Endothelial cell of umbilical vein (primary cell): ENCODE measurements at regions of chr10 and their contacts with region 1.

Region 1: DNA sequence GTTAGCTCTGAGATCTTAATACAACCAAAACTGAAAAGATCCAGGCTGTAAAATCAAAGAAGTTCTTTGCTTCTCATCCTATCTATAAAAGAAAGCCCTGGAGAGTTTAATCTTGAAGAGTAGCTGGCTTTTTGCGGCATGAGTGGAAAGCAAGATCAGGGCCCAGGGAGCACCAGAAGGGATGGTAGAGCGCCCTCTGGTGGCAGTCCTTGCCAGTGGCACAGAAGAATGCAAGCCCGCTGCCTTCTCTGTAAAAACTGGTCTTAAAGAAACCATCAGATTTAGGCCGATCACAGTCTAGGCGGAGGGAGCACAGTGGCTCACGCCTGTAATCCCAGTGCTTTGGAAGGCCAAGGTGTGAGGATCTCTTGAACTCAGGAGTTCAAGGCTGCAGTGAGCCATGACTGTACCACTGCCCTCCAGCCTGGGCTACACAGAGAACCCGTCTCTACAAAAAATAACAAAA is 35.6 kb downstream of the CPN1 start:
- DNase-seq: peak; percentile 85
- H3K4me3 ChIP-seq: no peak overlapping the region
- H3K27ac ChIP-seq: no peak overlapping the region
- H3K4me1 ChIP-seq: peaks cover 19% of the 10 kb centered on the region
- H3K27me3 ChIP-seq: no peaks in the 10 kb centered on the region
- CTCF ChIP-seq: peak; percentile 88 to 94
- POLR2A ChIP-seq: no peak

Region 2: DNA sequence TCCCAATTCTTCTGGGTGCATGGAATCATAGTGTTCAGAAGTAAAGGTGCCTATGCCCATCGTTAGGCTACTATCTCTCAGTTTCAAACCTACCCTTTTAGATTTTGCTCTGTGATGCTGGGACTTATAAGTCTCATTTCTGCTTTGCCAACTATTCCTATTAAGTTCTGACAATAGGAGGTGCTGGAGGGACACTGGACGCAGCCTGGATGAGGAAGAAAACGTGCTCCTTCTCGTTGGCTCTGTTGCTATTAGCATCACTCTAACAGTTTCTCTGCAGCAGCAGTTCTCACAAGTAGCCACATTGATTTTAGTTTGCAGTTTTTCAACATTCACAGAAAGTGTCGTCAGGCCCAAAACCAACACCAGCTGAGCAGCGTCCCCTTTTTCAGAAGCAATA is 191.2 kb before region 1 on chr10:
- CTCF ChIA-PET with region 1: interaction called, 75 read pairs
- POLR2A ChIA-PET with region 1: no interaction called
- dilution Hi-C with region 1: no loop called
- intact Hi-C with region 1: loop called (anchors 1 kb)
- DNase-seq: peak; percentile 91
- H3K4me3 ChIP-seq: no peak overlapping the region
- H3K27ac ChIP-seq: no peak overlapping the region
- H3K4me1 ChIP-seq: no peaks in the 10 kb centered on the region
- H3K27me3 ChIP-seq: no peaks in the 10 kb centered on the region
- CTCF ChIP-seq: peak; percentile 53 to 66
- POLR2A ChIP-seq: no peak

Region 3: DNA sequence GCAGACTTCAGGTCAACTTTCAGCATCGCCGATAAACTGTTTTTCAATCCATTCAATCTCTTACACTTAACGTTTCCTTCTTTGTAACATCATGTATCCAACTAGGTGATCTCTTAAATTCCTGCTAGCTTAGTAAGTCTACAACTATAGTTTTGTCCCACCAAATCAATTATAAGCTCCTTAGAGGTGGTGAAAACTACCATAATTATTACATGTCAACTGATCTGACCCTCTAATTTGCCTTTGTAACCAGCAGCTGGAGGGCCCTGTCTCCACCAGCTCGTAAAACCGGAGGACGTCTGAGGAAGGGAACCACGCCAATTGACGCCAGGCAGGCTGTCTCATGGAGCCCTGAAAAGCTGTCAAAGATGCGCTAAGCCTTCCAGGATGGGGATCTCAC is 150.2 kb before region 1 on chr10:
- CTCF ChIA-PET with region 1: interaction called, 18 read pairs
- POLR2A ChIA-PET with region 1: no interaction called
- dilution Hi-C with region 1: no loop called
- intact Hi-C with region 1: no loop called
- DNase-seq: no peak
- H3K4me3 ChIP-seq: no peak overlapping the region
- H3K27ac ChIP-seq: no peak overlapping the region
- H3K4me1 ChIP-seq: no peaks in the 10 kb centered on the region
- H3K27me3 ChIP-seq: no peaks in the 10 kb centered on the region
- CTCF ChIP-seq: no peak
- POLR2A ChIP-seq: no peak

Region 4: GRCh38 chr10:99966306-99966705 is 79.7 kb before region 1 on chr10:
- CTCF ChIA-PET with region 1: interaction called, 40 read pairs
- POLR2A ChIA-PET with region 1: interaction called, 3 read pairs
- dilution Hi-C with region 1: no loop called
- intact Hi-C with region 1: loop called (anchors 2 kb)
- DNase-seq: peak; percentile 93
- H3K4me3 ChIP-seq: peak overlapping the region in 1 of 3 experiments; percentile 6
- H3K27ac ChIP-seq: peak overlapping the region; percentile 96
- H3K4me1 ChIP-seq: peaks cover 69% of the 10 kb centered on the region
- H3K27me3 ChIP-seq: no peaks in the 10 kb centered on the region
- CTCF ChIP-seq: no peak
- POLR2A ChIP-seq: peak; percentile 43

Region 5: GRCh38 chr10:100020142-100020885 is 25.7 kb before region 1 on chr10:
- CTCF ChIA-PET with region 1: interaction called, 21 read pairs
- POLR2A ChIA-PET with region 1: no interaction called
- dilution Hi-C with region 1: no loop called
- intact Hi-C with region 1: no loop called
- DNase-seq: no peak
- H3K4me3 ChIP-seq: no peak overlapping the region
- H3K27ac ChIP-seq: no peak overlapping the region
- H3K4me1 ChIP-seq: no peaks in the 10 kb centered on the region
- H3K27me3 ChIP-seq: peaks cover 0 to 2% of the 10 kb centered on the region in 2 experiments
- CTCF ChIP-seq: no peak
- POLR2A ChIP-seq: no peak

Region 6: DNA sequence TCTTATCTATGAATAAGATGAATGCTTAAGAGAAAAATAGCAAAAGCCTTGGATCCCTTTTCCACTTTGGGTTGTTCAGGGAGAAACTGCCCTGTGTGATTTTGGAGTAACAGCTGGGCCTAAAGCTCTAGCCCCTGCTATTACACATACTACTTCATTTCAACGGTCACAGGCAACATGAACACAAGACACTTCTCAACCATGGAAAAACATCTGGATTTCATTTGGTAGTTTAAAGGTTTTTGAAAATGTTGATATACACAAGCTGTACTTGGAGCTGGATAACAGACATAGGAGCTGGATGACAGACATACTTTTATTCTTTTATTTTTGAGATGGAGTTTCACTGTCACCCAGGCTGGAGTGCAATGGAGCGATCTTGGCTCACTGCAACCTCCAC is 186.0 kb after region 1 on chr10:
- CTCF ChIA-PET with region 1: no interaction called
- POLR2A ChIA-PET with region 1: no interaction called
- dilution Hi-C with region 1: no loop called
- intact Hi-C with region 1: no loop called
- DNase-seq: no peak
- H3K4me3 ChIP-seq: no peak overlapping the region
- H3K27ac ChIP-seq: no peak overlapping the region
- H3K4me1 ChIP-seq: peaks cover 2% of the 10 kb centered on the region
- H3K27me3 ChIP-seq: no peaks in the 10 kb centered on the region
- CTCF ChIP-seq: no peak
- POLR2A ChIP-seq: no peak